ENCODE measurements at regions of chr15 and their contacts with region 1.

Region 1: GRCh38 chr15:25481207-25481859 is 42.5 kb upstream of the UBE3A start:
- DNase-seq: peak; percentile 8
- H3K4me3 ChIP-seq: peak overlapping the region in 1 of 4 donors; percentile 2
- H3K27ac ChIP-seq: no peak overlapping the region
- H3K4me1 ChIP-seq: peaks cover 0 to 4% (median 0%) of the 10 kb centered on the region in 4 donors
- H3K27me3 ChIP-seq: no peaks in the 10 kb centered on the region
- CTCF ChIP-seq: no peak
- EP300 ChIP-seq: no peak
- POLR2A ChIP-seq: no peak

Region 2: DNA sequence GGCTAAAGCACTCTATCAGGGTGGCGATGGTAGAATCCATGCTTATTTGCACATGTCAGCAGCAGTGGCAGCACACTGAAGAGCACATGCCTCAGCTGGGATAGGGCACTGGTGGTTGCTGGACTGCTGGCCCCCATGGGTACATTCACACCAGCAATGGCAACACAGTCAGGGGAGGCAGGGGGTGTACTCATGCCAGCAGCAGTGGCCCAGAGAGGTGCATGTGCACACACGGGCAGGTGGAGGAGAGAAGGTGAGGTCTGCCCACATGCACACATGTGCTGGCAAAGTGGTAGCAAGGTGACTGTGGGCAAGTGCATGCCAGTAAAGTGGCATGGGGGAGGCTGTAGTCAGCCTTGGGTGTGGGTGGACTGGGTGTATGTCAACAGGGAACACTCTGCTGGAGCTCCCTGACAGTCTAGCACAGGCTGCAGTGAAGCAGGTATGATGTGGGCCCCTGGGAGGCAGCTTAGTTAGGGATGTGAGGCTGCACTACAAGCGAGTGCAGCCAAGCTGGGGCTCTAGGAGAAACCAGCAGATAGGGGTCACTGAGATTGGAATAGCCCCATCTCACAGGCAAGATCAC is 859.6 kb before region 1 on chr15:
- in situ Hi-C with region 1: loop called in 1 of 4 experiments (anchors 25 kb)
- intact Hi-C with region 1: no loop called
- DNase-seq: no peak
- H3K4me3 ChIP-seq: no peak overlapping the region
- H3K27ac ChIP-seq: no peak overlapping the region
- H3K4me1 ChIP-seq: no peaks in the 10 kb centered on the region
- H3K27me3 ChIP-seq: no peaks in the 10 kb centered on the region
- CTCF ChIP-seq: no peak
- EP300 ChIP-seq: no peak
- POLR2A ChIP-seq: no peak

Region 3: GRCh38 chr15:24784506-24784905 is 696.8 kb before region 1 on chr15:
- in situ Hi-C with region 1: loop called in 1 of 4 experiments (anchors 25 kb)
- intact Hi-C with region 1: no loop called
- DNase-seq: no peak
- H3K4me3 ChIP-seq: no peak overlapping the region
- H3K27ac ChIP-seq: no peak overlapping the region
- H3K4me1 ChIP-seq: no peaks in the 10 kb centered on the region
- H3K27me3 ChIP-seq: no peaks in the 10 kb centered on the region
- CTCF ChIP-seq: no peak
- EP300 ChIP-seq: no peak
- POLR2A ChIP-seq: no peak

Measured in transverse colon (tissue), 4 donors.